Psoas muscle (tissue), 8 donors: ENCODE measurements at regions of chr18 and their contacts with region 1.

Region 1: DNA sequence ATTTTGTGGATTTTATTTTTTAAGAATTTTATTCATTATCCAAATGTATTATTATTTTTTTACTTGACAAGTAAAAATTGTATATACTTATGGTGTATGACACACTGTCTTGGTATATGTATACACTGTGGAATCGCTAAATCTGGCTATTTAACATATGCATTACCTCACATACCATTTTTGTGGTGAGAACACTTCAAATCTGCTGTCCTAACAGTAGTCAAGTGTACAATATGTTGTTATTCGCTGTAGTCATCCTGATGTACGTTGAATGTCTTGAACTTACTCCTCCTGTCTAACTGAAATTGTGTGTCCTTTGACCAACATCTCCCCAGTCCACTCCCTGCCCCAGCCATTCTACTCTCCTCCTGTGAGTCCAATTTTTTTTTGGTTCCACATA is 153.2 kb upstream of the PTPRM start:
- DNase-seq: no peak
- ATAC-seq: no peak
- H3K4me3 ChIP-seq: no peak overlapping the region
- H3K27ac ChIP-seq: no peak overlapping the region
- H3K4me1 ChIP-seq: no peaks in the 10 kb centered on the region
- H3K27me3 ChIP-seq: no peaks in the 10 kb centered on the region
- CTCF ChIP-seq: no peak

Region 2: DNA sequence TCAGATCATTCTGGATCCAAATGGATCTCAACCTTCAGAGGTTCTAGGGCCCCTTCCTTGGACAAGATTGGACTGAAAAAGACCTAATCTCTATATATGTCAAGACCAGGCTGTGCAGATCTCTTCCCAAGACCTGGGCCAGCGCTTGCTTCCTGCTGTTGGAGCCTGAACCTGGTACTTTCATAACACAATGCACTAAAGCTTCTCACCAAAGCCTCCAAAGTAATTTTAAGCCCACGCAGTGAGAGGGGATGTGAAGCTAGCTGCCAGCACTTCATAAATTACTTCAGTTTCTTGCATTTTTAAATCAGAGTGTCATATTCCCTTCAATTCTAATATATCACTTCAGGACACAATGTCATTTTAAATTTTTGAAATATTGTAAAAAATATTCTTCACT is 132.3 kb before region 1 on chr18:
- intact Hi-C with region 1: no loop called
- DNase-seq: no peak
- ATAC-seq: no peak
- H3K4me3 ChIP-seq: no peak overlapping the region
- H3K27ac ChIP-seq: no peak overlapping the region
- H3K4me1 ChIP-seq: no peaks in the 10 kb centered on the region
- H3K27me3 ChIP-seq: no peaks in the 10 kb centered on the region
- CTCF ChIP-seq: no peak

Region 3: DNA sequence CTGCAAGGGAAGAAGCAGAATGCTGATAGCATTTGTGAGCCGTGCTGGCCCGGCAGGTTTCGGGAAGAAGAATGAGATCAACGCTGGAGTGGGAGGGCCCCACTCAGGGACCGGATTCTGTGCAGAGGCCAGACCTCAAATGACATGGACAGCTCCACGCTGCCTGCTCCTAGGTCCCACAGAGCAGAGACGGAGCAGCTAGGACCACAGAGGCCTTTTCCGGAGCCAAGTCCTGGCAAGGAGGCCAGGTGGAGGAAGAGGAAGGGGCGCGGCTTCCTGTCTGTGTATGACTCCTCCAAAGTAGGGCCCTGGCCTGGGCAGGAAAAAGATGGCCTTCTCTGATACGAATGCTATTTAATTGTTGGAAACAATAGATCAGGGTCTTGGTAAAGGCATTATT is 43.1 kb before region 1 on chr18:
- intact Hi-C with region 1: loop called in 1 of 2 experiments (anchors 2 kb)
- DNase-seq: peak; percentile 59 to 77
- ATAC-seq: peak; percentile 47 to 78 (median 72)
- H3K4me3 ChIP-seq: no peak overlapping the region
- H3K27ac ChIP-seq: no peak overlapping the region
- H3K4me1 ChIP-seq: no peaks in the 10 kb centered on the region
- H3K27me3 ChIP-seq: no peaks in the 10 kb centered on the region
- CTCF ChIP-seq: no peak